ENCODE measurements at regions of chr2 and their contacts with region 1.

Region 1: DNA sequence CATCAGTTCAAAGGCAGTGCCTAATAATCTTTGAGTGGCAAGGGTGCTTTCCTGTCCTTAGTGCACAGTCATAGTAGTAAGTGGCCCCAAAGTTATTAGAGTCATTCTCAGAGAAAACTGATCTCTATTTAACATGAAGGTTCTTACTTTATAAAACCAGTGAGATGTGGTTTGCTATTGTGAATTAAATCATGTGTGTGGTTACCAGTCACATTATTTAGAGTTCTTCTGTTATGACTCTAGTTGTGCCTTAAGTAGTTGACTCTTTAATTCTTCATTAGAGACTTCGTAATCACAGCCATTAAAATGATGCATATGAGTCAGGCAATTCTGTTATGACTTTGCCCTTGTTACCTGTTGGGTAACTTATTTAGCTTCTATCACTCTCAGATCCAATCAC is 1392.9 kb upstream of the ACVR2A start:
- DNase-seq: no peak

Region 2: GRCh38 chr2:146429366-146429765 is 22.6 kb before region 1 on chr2:
- intact Hi-C with region 1: loop called in 1 of 2 experiments (anchors 2 kb)
- DNase-seq: no peak

Measured in posterior vena cava (tissue), 2 donors.